ENCODE measurements at regions of chr1 and their contacts with region 1.

Region 1: DNA sequence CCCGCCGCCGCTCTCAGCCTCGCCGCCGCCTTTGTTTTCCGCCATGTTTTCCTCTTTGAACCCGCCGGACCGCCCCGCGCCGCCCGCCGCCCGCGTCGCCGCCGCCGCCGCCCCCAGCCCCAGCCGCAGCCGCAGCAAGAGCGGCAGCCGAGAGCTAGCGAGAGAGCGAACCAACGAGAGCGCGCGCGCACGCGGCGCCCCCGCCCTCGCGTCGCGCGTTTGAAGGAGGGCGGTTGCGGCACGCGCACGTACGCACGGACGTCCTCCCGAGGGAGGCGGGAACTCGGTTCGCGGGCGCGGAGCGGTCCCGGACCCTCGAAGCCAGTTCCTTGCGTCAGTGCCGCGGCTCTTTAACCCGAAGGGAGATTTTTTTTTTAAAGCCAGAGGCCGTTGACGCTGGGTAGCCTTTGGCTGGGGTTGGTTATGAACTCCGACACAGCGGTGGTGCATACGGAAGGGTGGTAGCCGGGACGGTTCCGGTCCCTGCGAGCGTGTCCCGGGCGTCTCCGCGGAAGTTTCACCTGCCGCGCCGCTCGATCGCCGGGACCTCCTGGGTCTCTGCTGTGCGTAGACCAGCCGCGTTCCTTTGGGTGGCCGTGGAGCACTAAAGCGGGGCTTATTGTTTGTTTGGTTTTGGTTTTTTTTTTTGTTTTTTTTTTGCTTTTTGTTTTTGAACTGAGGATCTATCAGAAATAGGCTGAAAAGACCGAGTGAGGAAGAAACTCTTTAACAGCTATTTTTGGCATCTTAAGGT is at the start of gene TRIM33:
- DNase-seq: peak; percentile 92
- H3K4me3 Mint-ChIP-seq: peak within 1 kb of the TSS; percentile 79
- H3K27ac Mint-ChIP-seq: peak within 1 kb of the TSS; percentile 97
- H3K4me1 Mint-ChIP-seq: peaks cover 34% of the 10 kb centered on the region
- H3K27me3 Mint-ChIP-seq: no peaks in the 10 kb centered on the region
- CTCF ChIP-seq: no peak
- total RNA-seq, gene TRIM33: 33.2 and 38.3 TPM in 2 replicates

Region 2: GRCh38 chr1:114443977-114444376 is 67.2 kb before region 1 on chr1:
- CTCF ChIA-PET with region 1: no interaction called
- POLR2A ChIA-PET with region 1: no interaction called
- intact Hi-C with region 1: no loop called
- DNase-seq: no peak
- H3K4me3 Mint-ChIP-seq: no peak overlapping the region
- H3K27ac Mint-ChIP-seq: no peak overlapping the region
- H3K4me1 Mint-ChIP-seq: no peaks in the 10 kb centered on the region
- H3K27me3 Mint-ChIP-seq: no peaks in the 10 kb centered on the region
- CTCF ChIP-seq: no peak

Region 3: DNA sequence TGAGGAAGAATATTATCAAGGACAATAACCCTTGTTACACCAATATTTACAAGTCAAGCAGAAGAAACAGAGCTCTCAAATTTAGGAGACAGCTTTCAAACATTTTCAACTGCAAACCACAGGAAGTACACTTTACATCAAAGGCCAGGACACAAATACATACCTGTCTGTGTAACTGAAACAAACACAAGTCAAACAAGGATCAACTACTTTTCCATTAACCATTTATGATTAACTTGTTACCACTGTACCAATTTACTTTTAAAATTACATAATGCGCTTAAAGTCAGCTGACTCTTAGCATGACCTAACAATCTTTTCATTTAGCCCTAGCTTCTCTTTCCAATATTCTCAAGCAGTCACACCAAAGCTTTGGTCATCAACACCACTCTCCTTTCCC is 43.7 kb before region 1 on chr1:
- CTCF ChIA-PET with region 1: no interaction called
- POLR2A ChIA-PET with region 1: interaction called, 22 read pairs
- intact Hi-C with region 1: no loop called
- DNase-seq: no peak
- H3K4me3 Mint-ChIP-seq: no peak overlapping the region
- H3K27ac Mint-ChIP-seq: no peak overlapping the region
- H3K4me1 Mint-ChIP-seq: peaks cover 20% of the 10 kb centered on the region
- H3K27me3 Mint-ChIP-seq: no peaks in the 10 kb centered on the region
- CTCF ChIP-seq: no peak

Region 4: GRCh38 chr1:114499489-114499888 is 11.7 kb before region 1 on chr1:
- CTCF ChIA-PET with region 1: interaction called, 3 read pairs
- POLR2A ChIA-PET with region 1: interaction called, 15 read pairs
- intact Hi-C with region 1: no loop called
- DNase-seq: no peak
- H3K4me3 Mint-ChIP-seq: no peak overlapping the region
- H3K27ac Mint-ChIP-seq: peak overlapping the region; percentile 17
- H3K4me1 Mint-ChIP-seq: peaks cover 5% of the 10 kb centered on the region
- H3K27me3 Mint-ChIP-seq: no peaks in the 10 kb centered on the region
- CTCF ChIP-seq: no peak

Region 5: GRCh38 chr1:114522258-114522575 is 11.0 kb after region 1 on chr1:
- CTCF ChIA-PET with region 1: interaction called, 3 read pairs
- POLR2A ChIA-PET with region 1: interaction called, 10 read pairs
- intact Hi-C with region 1: no loop called
- DNase-seq: no peak
- H3K4me3 Mint-ChIP-seq: no peak overlapping the region
- H3K27ac Mint-ChIP-seq: no peak overlapping the region
- H3K4me1 Mint-ChIP-seq: no peaks in the 10 kb centered on the region
- H3K27me3 Mint-ChIP-seq: no peaks in the 10 kb centered on the region
- CTCF ChIP-seq: no peak

Region 6: DNA sequence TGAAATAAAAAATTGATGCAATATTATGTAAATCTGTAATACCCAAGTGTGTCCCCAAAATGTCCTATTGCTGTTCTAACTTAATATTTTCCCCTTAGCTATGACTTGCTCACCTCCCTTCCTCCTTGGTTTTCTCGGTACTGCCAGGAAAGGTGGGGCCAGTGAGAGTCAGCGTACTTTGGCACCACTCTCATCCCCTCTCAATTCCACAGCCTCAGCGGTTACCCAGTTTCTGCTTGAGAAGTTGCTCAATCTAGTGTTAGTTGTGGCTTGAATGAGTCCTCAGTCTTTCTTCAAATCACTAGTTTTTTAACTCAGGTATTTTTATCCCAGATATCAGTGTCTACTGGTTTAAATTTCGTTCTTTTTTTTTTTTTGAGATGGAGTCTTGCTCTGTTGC is 37.9 kb after region 1 on chr1:
- CTCF ChIA-PET with region 1: interaction called, 3 read pairs
- POLR2A ChIA-PET with region 1: interaction called, 14 read pairs
- intact Hi-C with region 1: no loop called
- DNase-seq: peak; percentile 77
- H3K4me3 Mint-ChIP-seq: no peak overlapping the region
- H3K27ac Mint-ChIP-seq: no peak overlapping the region
- H3K4me1 Mint-ChIP-seq: peaks cover 7% of the 10 kb centered on the region
- H3K27me3 Mint-ChIP-seq: no peaks in the 10 kb centered on the region
- CTCF ChIP-seq: no peak

Region 7: GRCh38 chr1:114581335-114582287 is 70.4 kb after region 1 on chr1 and contains the start of gene BCAS2:
- CTCF ChIA-PET with region 1: no interaction called
- POLR2A ChIA-PET with region 1: interaction called, 25 read pairs
- intact Hi-C with region 1: no loop called
- DNase-seq: peak; percentile 98
- H3K4me3 Mint-ChIP-seq: peak within 1 kb of the TSS; percentile 98
- H3K27ac Mint-ChIP-seq: peak within 1 kb of the TSS; percentile 99
- H3K4me1 Mint-ChIP-seq: peaks cover 6% of the 10 kb centered on the region
- H3K27me3 Mint-ChIP-seq: no peaks in the 10 kb centered on the region
- CTCF ChIP-seq: no peak
- total RNA-seq, gene BCAS2: 85.4 and 97.2 TPM in 2 replicates

Region 8: GRCh38 chr1:114641377-114641776 is 130.2 kb after region 1 on chr1:
- CTCF ChIA-PET with region 1: no interaction called
- POLR2A ChIA-PET with region 1: no interaction called
- intact Hi-C with region 1: no loop called
- DNase-seq: no peak
- H3K4me3 Mint-ChIP-seq: no peak overlapping the region
- H3K27ac Mint-ChIP-seq: no peak overlapping the region
- H3K4me1 Mint-ChIP-seq: no peaks in the 10 kb centered on the region
- H3K27me3 Mint-ChIP-seq: no peaks in the 10 kb centered on the region
- CTCF ChIP-seq: no peak

Region 9: GRCh38 chr1:114716304-114717170 is 205.3 kb after region 1 on chr1 and contains the start of gene NRAS:
- CTCF ChIA-PET with region 1: no interaction called
- POLR2A ChIA-PET with region 1: interaction called, 11 read pairs
- intact Hi-C with region 1: no loop called
- DNase-seq: peak; percentile 89
- H3K4me3 Mint-ChIP-seq: peak within 1 kb of the TSS; percentile 99
- H3K27ac Mint-ChIP-seq: peak within 1 kb of the TSS; percentile 100
- H3K4me1 Mint-ChIP-seq: peaks cover 8% of the 10 kb centered on the region
- H3K27me3 Mint-ChIP-seq: no peaks in the 10 kb centered on the region
- CTCF ChIP-seq: no peak
- total RNA-seq, gene NRAS: 38.9 and 41.4 TPM in 2 replicates

Measured in MCF 10A (cell line).